Heart left ventricle (tissue), 16 donors: ENCODE measurements at regions of chr10 and their contacts with region 1.

Region 1: DNA sequence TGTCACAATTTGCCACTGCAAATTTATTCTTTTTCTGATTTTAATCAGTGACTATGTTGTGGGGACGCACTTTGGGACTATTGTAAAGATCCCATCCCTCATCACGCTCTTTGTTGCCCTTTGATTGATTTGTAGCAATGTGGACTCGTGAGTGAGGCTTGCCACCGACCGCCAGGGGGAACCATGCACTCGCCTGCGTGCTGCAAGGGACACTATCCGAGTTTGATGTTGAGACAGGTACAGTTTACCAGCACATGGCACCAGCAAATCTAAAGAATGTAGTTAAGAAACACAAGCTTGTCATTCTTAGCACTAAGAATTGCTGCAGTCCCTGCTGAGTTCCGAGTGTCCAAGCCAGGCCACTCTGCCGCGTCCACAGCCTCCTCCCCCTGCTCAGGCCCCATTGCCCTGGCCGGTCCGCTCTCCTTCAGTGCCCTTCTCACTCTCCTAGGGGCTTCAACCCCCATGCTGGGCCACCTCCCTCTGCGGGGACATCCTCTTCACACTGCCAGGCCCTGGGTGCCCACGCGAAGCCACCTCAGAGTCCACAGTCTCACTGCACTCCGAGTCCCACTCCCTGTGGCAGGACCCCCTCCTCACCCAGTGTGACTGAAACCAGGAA is 2.0 kb upstream of the SFTPA2 start:
- DNase-seq: peak; percentile 43 to 81 (median 66)
- ATAC-seq: peak; percentile 69 to 91 (median 75)
- H3K4me3 ChIP-seq: peak overlapping the region in 4 of 12 donors; percentile 17 to 35 (median 20)
- H3K27ac ChIP-seq: no peak overlapping the region
- H3K4me1 ChIP-seq: peaks cover 0 to 7% (median 0%) of the 10 kb centered on the region in 12 donors
- H3K27me3 ChIP-seq: peaks cover 0 to 14% (median 0%) of the 10 kb centered on the region in 9 donors
- CTCF ChIP-seq: peak; percentile 69 to 89 (median 76)
- POLR2A ChIP-seq: no peak

Region 2: DNA sequence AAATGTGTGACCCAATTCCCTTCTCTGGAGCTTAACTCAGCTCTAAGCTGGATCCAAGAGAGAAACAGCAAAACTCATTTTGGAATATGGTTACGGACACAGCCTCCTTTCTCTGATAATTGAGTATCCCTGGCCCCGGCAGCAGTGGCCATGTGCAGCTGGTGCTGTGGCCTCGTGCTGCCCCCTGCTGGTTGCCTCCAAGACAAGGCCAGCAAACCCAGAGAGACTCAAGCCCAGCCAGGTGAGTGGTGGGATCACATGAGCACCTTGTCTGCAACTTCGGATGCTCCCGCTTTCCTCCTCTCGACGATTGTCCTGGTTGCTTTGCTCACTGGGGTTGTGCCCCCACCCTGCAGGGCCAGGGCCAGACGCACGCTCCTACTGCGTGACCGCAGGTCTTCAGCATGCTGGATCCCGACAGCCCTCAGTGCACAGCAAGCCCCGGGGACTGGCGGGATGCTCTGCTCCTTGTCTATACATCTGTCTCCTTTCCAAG is 367.2 kb after region 1 on chr10:
- intact Hi-C with region 1: loop called in 8 of 10 experiments (anchors 1 to 10 kb)
- DNase-seq: peak; percentile 82 to 90 (median 84)
- ATAC-seq: peak; percentile 82 to 92 (median 86)
- H3K4me3 ChIP-seq: no peak overlapping the region
- H3K27ac ChIP-seq: no peak overlapping the region
- H3K4me1 ChIP-seq: peaks cover 0 to 32% (median 8%) of the 10 kb centered on the region in 12 donors
- H3K27me3 ChIP-seq: peaks cover 0 to 4% (median 0%) of the 10 kb centered on the region in 9 donors
- CTCF ChIP-seq: peak; percentile 85 to 98 (median 92)
- POLR2A ChIP-seq: no peak

Region 3: GRCh38 chr10:79938728-79939406 is 376.6 kb after region 1 on chr10:
- intact Hi-C with region 1: loop called in 3 of 10 experiments (anchors 5 to 10 kb)
- DNase-seq: peak in 4 of 5 donors; percentile 35 to 69 (median 56)
- ATAC-seq: peak; percentile 58 to 90 (median 72)
- H3K4me3 ChIP-seq: no peak overlapping the region
- H3K27ac ChIP-seq: peak overlapping the region in 1 of 12 donors; percentile 74
- H3K4me1 ChIP-seq: peaks cover 0 to 27% (median 0%) of the 10 kb centered on the region in 12 donors
- H3K27me3 ChIP-seq: no peaks in the 10 kb centered on the region
- CTCF ChIP-seq: no peak
- POLR2A ChIP-seq: no peak

Region 4: DNA sequence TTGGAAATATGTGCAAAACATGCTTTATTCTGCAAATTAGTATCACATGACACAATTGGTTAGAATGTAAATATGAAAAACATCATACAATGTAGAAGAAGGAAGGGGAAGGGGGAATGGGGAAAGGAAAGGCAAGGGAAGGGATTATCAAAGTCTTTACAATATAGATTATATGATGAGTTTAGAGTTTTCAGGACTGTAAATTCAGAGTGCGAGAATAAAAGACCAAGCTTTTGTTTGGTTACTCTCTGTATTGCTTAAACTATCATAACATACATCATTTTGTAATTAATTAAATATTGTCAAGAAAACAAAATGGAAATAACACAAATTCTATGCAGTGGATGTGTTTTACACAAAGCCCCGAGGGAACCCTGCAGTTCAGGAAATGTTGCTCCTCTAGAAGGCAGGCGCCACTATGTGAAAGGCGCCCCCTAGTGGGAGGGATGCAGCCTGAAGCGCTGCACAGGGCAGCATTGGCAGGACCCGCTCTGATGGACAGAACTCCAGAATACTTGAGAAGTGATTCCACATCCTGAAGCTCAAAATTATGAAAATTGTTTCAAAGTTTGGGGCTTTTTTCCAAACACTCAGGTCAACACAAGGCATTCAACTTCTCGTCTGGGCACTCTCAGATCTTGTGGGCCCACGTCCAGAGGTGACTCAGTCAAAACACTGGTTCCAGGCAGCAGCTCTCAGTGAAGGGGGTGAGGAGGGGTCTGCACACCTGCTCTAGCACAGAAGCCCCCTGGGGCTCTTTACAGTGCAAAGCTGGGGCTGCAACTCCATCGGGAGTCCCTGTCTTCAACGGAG is 484.6 kb after region 1 on chr10:
- intact Hi-C with region 1: loop called in 1 of 10 experiments (anchors 5 kb)
- DNase-seq: peak; percentile 73 to 87 (median 77)
- ATAC-seq: peak; percentile 82 to 93 (median 92)
- H3K4me3 ChIP-seq: no peak overlapping the region
- H3K27ac ChIP-seq: no peak overlapping the region
- H3K4me1 ChIP-seq: peaks cover 0 to 6% (median 0%) of the 10 kb centered on the region in 12 donors
- H3K27me3 ChIP-seq: no peaks in the 10 kb centered on the region
- CTCF ChIP-seq: peak; percentile 77 to 97 (median 90)
- POLR2A ChIP-seq: no peak

Region 5: DNA sequence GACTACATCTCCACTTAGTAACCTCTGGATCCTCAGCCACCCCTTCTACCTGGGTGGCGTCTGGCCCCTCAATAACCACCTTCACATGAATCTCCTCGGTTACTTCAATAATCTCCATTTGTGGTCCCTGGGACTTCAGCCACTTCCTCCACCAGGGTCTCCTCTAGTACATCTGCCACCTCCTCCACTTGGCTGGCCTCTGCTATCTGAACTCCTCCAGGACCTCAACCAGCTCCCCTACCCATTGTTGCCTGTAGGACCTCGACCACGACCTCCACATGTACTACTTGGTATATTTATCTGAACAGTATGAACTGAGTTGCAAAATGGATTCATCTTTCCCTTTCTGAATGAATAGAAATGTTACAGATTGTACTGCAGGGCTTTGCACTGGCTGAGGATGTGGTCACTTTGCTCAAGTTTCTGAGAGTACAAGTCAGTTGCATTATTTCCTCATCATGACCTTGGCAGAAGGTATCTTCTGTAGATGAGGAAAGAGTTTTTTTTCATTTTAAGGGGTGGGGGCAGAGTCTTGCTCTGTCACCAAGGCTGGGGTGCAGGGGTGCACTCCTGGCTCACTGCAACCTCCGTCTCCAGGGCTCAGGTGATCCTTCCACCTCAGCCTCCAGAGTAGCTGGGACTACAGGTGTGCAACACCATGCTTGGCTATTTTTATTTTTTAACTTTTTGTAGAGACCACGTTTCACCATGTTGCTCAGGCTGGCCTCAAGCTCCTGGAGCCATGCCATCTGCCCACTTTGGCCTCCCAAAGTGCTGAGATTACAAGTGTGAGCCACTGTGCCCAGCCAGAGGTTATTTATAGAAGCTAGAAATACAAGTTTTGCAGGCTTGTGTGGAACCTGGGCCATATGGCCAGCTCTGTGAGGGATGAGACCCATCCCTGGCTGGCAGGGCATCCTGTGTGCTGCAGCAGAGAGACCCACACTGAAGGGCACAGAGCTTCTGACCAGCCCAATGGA is 691.3 kb after region 1 on chr10:
- intact Hi-C with region 1: loop called in 1 of 10 experiments (anchors 5 kb)
- DNase-seq: no peak
- ATAC-seq: peak; percentile 22 to 58 (median 46)
- H3K4me3 ChIP-seq: no peak overlapping the region
- H3K27ac ChIP-seq: no peak overlapping the region
- H3K4me1 ChIP-seq: peaks cover 0 to 8% (median 0%) of the 10 kb centered on the region in 12 donors
- H3K27me3 ChIP-seq: no peaks in the 10 kb centered on the region
- CTCF ChIP-seq: no peak
- POLR2A ChIP-seq: no peak